ENCODE measurements at regions of chr1 and their contacts with region 1.

Region 1: DNA sequence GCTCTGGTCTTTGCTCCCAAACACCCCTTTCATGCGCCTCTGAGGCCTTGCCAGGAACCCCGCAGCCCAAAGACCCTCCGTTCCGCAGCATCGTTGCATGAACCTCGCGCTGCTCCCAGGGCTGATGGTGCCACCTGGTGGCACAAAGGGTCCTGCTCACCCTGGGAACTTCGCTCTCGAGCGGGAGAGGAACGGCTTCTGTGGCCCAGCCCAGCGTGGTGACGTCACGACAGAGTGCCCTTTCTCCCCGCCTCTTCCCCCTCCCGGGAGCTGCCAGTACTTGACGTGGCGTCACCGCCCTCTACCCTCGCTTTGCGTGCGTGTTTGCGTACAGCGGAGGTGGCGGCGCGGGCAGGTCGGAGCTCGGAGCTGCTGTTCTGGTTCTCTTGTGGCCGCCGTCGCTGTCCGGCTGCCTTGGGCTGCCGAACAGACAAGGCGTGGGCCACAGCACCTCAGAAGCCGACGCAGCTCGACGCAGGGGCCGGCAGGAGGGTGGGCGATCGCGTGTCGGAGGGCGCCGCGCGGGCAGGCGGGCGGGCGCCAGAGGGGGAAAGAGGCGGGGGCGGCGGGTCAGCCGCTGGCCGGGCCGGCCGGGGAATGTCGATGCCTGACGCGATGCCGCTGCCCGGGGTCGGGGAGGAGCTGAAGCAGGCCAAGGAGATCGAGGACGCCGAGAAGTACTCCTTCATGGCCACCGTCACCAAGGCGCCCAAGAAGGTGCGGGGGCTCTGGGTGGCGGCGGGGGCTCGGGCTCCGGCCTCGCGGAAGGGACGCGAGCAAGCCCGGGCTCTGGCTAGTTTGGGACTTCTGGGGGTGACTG is at the start of gene AHCYL1:
- DNase-seq: peak; percentile 99
- ATAC-seq: peak; percentile 93
- H3K4me3 Mint-ChIP-seq: peak within 1 kb of the TSS; percentile 96
- H3K27ac Mint-ChIP-seq: peak within 1 kb of the TSS; percentile 93
- H3K4me1 Mint-ChIP-seq: peaks cover 42% of the 10 kb centered on the region
- H3K27me3 Mint-ChIP-seq: no peaks in the 10 kb centered on the region; the same call in 1 of the 2 replicates
- CTCF ChIP-seq: peak; percentile 92
- total RNA-seq, gene AHCYL1: 92.1 to 99.4 TPM (median 98.6 TPM) in 3 replicates

Region 2: GRCh38 chr1:109739738-109740660 is 244.7 kb before region 1 on chr1:
- CTCF ChIA-PET with region 1: interaction called, 21 read pairs
- POLR2A ChIA-PET with region 1: no interaction called
- DNase-seq: peak; percentile 72
- ATAC-seq: peak; percentile 88
- H3K4me3 Mint-ChIP-seq: peak overlapping the region; percentile 64
- H3K27ac Mint-ChIP-seq: no peak overlapping the region
- H3K4me1 Mint-ChIP-seq: peaks cover 9% of the 10 kb centered on the region
- H3K27me3 Mint-ChIP-seq: peaks cover 70% of the 10 kb centered on the region
- CTCF ChIP-seq: no peak

Region 3: DNA sequence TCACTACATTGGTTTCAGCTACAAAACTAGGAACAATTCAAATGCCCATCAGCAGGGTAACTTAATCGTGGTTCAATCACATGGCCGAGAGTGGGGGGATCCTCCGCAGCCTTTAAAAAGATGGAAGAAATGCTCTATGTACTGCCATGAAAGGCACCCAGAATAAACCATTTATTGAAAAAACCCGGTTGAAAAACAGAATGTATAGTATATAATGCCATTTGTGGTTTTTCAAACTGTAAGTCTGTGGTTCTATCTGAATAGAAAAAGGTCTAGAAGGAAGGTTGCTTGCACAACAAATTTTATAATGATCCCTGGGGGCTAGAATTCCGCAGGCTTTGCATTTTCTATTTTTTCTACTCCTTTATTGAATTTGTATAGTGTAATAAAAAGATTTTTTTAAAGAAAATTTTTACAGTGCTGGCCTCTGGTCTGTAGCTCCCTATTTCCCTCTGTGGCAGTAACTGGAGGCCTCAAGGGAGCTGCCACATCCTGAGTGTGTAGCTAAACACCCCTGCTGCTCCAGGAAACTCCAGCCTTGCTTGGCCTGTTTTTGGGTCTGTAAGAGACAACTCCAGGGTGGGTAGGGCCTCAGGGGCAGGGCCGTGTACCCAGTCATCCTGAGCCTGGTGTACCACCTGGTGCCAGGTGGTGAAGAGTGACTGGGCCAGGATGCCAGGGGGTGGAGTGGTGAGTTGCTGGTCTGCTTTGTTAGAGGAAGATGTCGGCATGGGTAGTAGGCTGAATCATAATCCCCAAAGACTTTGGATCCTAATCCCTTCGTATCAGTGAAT is 169.5 kb before region 1 on chr1:
- CTCF ChIA-PET with region 1: interaction called, 11 read pairs
- POLR2A ChIA-PET with region 1: no interaction called
- DNase-seq: no peak
- ATAC-seq: no peak
- H3K4me3 Mint-ChIP-seq: no peak overlapping the region
- H3K27ac Mint-ChIP-seq: no peak overlapping the region
- H3K4me1 Mint-ChIP-seq: no peaks in the 10 kb centered on the region
- H3K27me3 Mint-ChIP-seq: no peaks in the 10 kb centered on the region; the same call in 1 of the 2 replicates
- CTCF ChIP-seq: no peak

Region 4: DNA sequence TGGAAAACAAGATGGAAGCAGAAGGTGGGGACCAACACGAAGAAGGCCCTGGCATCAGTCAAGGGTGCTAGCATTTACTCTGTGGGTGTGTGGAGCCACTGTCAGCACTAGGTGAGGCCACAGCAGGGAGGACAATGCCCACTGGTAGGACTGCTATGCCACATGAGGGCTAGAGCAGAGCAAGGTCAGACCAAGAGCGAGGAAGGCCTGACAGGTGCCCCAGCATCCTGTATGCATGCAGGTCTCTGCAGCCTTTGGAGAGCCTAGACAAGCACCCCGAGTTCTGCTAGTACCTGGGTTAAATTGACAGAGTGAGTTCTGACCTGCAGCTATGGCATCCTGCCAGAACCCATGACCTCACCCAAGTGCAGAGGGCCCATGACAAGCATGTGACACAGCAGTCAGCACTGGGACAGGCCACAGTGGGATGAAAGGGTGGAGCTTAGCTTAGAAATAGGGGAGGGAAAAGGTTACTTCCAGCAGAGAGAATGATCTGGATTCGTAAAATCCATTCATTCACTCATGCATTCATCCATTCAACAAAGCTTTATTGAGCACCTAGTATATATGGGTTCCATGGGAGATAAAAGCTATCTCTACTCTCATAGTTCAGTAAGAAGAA is 83.0 kb before region 1 on chr1:
- CTCF ChIA-PET with region 1: interaction called, 10 read pairs
- POLR2A ChIA-PET with region 1: interaction called, 4 read pairs
- DNase-seq: no peak
- ATAC-seq: no peak
- H3K4me3 Mint-ChIP-seq: no peak overlapping the region
- H3K27ac Mint-ChIP-seq: no peak overlapping the region
- H3K4me1 Mint-ChIP-seq: 0 out of 2 replicates have a peak, but pooled peaks cover 3% of the 10 kb centered on the region
- H3K27me3 Mint-ChIP-seq: no peaks in the 10 kb centered on the region; the same call in 1 of the 2 replicates
- CTCF ChIP-seq: no peak

Region 5: GRCh38 chr1:109959974-109960744 is 24.5 kb before region 1 on chr1:
- CTCF ChIA-PET with region 1: interaction called, 51 read pairs
- POLR2A ChIA-PET with region 1: interaction called, 10 read pairs
- DNase-seq: peak; percentile 26
- ATAC-seq: peak; percentile 93
- H3K4me3 Mint-ChIP-seq: peak overlapping the region; percentile 11
- H3K27ac Mint-ChIP-seq: peak overlapping the region; percentile 50
- H3K4me1 Mint-ChIP-seq: peaks cover 36% of the 10 kb centered on the region
- H3K27me3 Mint-ChIP-seq: peaks cover 73% of the 10 kb centered on the region
- CTCF ChIP-seq: no peak

Region 6: DNA sequence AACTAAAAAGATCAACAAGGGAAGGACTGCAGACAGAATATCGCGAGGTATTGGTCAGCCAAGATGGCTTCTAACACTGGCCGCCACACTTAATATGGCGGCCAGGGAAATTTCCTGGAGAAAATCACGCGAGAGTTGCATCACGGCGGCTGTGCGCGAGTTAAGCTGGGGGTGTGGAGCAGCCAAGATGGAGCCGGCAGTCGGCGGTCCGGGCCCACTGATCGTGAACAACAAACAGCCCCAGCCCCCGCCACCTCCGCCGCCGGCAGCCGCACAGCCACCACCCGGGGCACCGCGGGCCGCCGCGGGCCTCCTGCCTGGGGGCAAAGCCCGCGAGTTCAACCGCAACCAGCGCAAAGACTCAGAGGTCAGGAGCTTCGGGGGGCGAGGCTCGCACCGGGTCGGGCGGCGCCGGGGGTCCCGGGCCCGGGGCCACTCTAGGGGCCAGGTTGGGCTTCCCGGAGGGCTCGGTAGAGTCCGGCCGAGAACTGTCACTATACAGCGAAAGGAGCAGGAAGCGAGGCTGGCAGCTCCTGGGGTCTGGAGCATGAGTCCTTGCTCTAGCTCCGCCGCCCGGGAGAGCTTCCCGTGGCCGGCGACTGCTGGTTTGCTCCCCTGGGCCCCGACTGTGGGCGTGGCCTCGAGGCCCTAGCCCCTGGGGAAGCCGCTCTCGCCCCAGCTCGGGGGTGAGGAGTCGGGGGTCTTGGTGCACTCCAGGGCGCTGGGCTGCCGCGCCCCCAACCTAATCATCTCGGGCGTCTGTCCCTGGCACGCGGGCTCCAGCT is 50.0 kb after region 1 on chr1 and contains the start of gene STRIP1:
- CTCF ChIA-PET with region 1: interaction called, 25 read pairs
- POLR2A ChIA-PET with region 1: interaction called, 5 read pairs
- DNase-seq: peak; percentile 88
- ATAC-seq: peak; percentile 83
- H3K4me3 Mint-ChIP-seq: peak within 1 kb of the TSS; percentile 92
- H3K27ac Mint-ChIP-seq: peak within 1 kb of the TSS; percentile 95
- H3K4me1 Mint-ChIP-seq: peaks cover 33% of the 10 kb centered on the region
- H3K27me3 Mint-ChIP-seq: no peaks in the 10 kb centered on the region
- CTCF ChIP-seq: no peak
- total RNA-seq, gene STRIP1: 36.8 to 42.8 TPM (median 38.2 TPM) in 3 replicates

Region 7: GRCh38 chr1:110053557-110054428 is 69.1 kb after region 1 on chr1:
- CTCF ChIA-PET with region 1: no interaction called
- POLR2A ChIA-PET with region 1: no interaction called
- DNase-seq: peak; percentile 86
- ATAC-seq: peak; percentile 94
- H3K4me3 Mint-ChIP-seq: no peak overlapping the region
- H3K27ac Mint-ChIP-seq: no peak overlapping the region; the same call in 1 of the 2 replicates
- H3K4me1 Mint-ChIP-seq: no peaks in the 10 kb centered on the region
- H3K27me3 Mint-ChIP-seq: no peaks in the 10 kb centered on the region
- CTCF ChIP-seq: peak; percentile 95

Measured in WTC11 (cell line).